AG04449 (cell line): ENCODE measurements at regions of chr11 and their contacts with region 1.

Region 1: GRCh38 chr11:66311965-66312548 is 4.8 kb downstream of the CD248 start:
- DNase-seq: no peak
- H3K4me3 ChIP-seq: peak overlapping the region; percentile 63
- CTCF ChIP-seq: peak; percentile 90

Region 2: GRCh38 chr11:66136752-66137123 is 175.3 kb before region 1 on chr11:
- CTCF ChIA-PET with region 1: no interaction called
- POLR2A ChIA-PET with region 1: no interaction called
- DNase-seq: no peak
- H3K4me3 ChIP-seq: no peak overlapping the region
- CTCF ChIP-seq: no peak

Region 3: GRCh38 chr11:66282468-66283386 is 29.3 kb before region 1 on chr11:
- CTCF ChIA-PET with region 1: interaction called, 109 read pairs
- POLR2A ChIA-PET with region 1: interaction called, 6 read pairs
- DNase-seq: peak; percentile 42
- H3K4me3 ChIP-seq: no peak overlapping the region
- CTCF ChIP-seq: peak; percentile 98

Region 4: DNA sequence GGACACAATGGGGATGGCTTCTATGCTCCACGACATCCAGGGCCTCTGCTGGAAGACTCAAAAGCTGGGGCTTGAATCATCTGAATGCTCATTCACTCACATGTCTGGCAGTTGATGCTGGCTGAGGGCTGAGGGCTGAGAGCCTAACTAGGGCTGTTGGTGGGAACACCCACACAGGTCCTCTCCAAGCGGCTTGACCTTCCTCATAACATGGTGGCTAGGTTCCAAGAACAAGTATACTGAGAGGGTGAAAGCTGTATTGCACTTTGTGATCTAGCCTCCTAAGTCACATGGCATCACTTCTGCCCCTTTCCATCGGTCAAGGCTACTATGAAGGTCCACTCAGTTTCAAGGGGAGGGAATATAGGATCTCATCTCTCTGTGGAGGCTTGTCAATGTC is 12.9 kb before region 1 on chr11:
- CTCF ChIA-PET with region 1: interaction called, 53 read pairs
- POLR2A ChIA-PET with region 1: no interaction called
- DNase-seq: no peak
- H3K4me3 ChIP-seq: no peak overlapping the region
- CTCF ChIP-seq: no peak

Region 5: GRCh38 chr11:66336234-66337102 is 24.4 kb after region 1 on chr11 and contains the start of gene RIN1:
- CTCF ChIA-PET with region 1: interaction called, 231 read pairs
- POLR2A ChIA-PET with region 1: interaction called, 106 read pairs
- DNase-seq: peak; percentile 71
- H3K4me3 ChIP-seq: peak within 1 kb of the TSS; percentile 80
- CTCF ChIP-seq: peak; percentile 29

Region 6: GRCh38 chr11:66363805-66364535 is 51.9 kb after region 1 on chr11:
- CTCF ChIA-PET with region 1: interaction called, 12 read pairs
- POLR2A ChIA-PET with region 1: interaction called, 4 read pairs
- DNase-seq: no peak
- H3K4me3 ChIP-seq: no peak overlapping the region
- CTCF ChIP-seq: peak; percentile 67

Region 7: DNA sequence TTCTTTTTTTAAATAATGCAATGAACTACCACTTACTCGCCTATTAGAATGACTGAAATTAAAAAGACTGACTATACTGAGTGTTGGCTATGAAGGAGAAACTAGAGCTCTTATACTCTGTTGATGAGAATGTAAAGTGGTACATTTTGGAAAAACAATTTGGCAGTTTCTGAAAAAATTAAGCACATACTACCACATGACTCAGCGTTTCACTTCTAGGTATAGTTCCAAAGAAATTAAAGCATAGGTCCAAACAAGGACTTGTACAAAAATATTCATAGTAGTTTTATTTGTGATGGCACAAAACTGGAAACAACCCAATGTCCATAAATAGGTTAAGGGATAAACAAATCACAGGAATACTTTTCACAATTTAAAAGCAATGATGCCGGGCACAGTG is 81.9 kb after region 1 on chr11:
- CTCF ChIA-PET with region 1: interaction called, 260 read pairs
- POLR2A ChIA-PET with region 1: interaction called, 6 read pairs
- DNase-seq: no peak
- H3K4me3 ChIP-seq: no peak overlapping the region
- CTCF ChIP-seq: no peak